ENCODE measurements at regions of chr10 and their contacts with region 1.

Region 1: DNA sequence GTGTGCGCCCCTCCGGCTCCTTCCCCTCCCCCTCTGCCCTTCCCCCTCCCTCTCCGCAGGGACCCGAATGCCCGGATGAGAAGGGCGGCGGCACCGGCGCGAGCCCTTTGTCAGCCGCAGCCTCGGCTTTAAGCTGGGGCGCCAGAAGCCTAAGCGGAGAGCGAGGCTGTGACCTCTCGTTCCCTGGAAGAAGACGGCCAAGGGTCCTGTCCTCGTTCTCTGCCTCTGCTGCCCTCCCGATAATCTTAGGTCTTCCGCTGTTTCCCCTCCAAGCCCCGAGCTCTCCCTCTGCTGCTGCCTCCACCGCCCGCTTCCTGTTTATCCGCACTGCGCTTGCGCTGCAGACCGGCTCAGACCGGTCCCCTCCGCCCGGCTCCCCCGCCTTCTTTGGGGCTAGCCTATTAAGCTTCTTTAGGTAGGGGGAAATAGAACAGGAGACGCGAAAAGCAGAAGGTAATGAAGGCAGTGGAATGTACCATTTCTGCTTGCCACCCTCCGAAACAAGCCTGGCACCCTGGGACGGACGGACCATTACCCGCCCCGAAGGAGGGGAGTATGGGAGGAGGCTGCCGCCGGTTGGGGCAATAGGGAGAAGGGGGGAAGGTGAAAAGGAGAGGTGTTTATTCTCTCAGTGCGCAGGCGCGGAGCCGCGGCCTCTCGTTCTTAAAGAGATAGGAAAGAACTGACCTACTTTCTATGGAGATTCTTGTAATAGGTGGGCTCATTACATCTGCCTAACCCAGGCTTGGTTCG is at the start of gene OGA:
- DNase-seq: peak; percentile 90 to 99 (median 98)
- ATAC-seq: peak; percentile 91 to 92 (median 91)
- H3K4me3 ChIP-seq: peak within 1 kb of the TSS; percentile 95 to 100
- H3K4me3 Mint-ChIP-seq: peak within 1 kb of the TSS; percentile 94 to 99 (median 98)
- H3K27ac ChIP-seq: peak within 1 kb of the TSS; percentile 74
- H3K27ac Mint-ChIP-seq: peak within 1 kb of the TSS; percentile 96 to 98
- H3K4me1 ChIP-seq: peaks cover 26 to 29% of the 10 kb centered on the region in 2 experiments
- H3K4me1 Mint-ChIP-seq: peaks cover 41 to 61% (median 46%) of the 10 kb centered on the region in 3 donors
- H3K27me3 ChIP-seq: no peaks in the 10 kb centered on the region
- H3K27me3 Mint-ChIP-seq: no peaks in the 10 kb centered on the region
- total RNA-seq, gene OGA: 232 to 364 (median 244) TPM

Region 2: GRCh38 chr10:101772895-101773761 is 45.2 kb before region 1 on chr10:
- CTCF ChIA-PET with region 1: no interaction called
- POLR2A ChIA-PET with region 1: no interaction called
- DNase-seq: no peak
- ATAC-seq: no peak
- H3K4me3 ChIP-seq: no peak overlapping the region
- H3K4me3 Mint-ChIP-seq: no peak overlapping the region
- H3K27ac ChIP-seq: no peak overlapping the region
- H3K27ac Mint-ChIP-seq: no peak overlapping the region
- H3K4me1 ChIP-seq: peaks cover 3 to 25% of the 10 kb centered on the region in 2 experiments
- H3K4me1 Mint-ChIP-seq: peaks cover 19 to 32% (median 20%) of the 10 kb centered on the region in 3 donors
- H3K27me3 ChIP-seq: peaks cover 23 to 85% of the 10 kb centered on the region in 2 experiments
- H3K27me3 Mint-ChIP-seq: peaks cover 51 to 72% of the 10 kb centered on the region in 2 donors

Region 3: GRCh38 chr10:101835064-101835761 is 16.9 kb after region 1 on chr10:
- CTCF ChIA-PET with region 1: interaction called, 6 to 28 read pairs
- POLR2A ChIA-PET with region 1: interaction called in 1 of 2 experiments, 5 read pairs
- DNase-seq: no peak
- ATAC-seq: no peak
- H3K4me3 ChIP-seq: no peak overlapping the region
- H3K4me3 Mint-ChIP-seq: peak overlapping the region in 1 of 3 donors; percentile 5
- H3K27ac ChIP-seq: no peak overlapping the region
- H3K27ac Mint-ChIP-seq: peak overlapping the region; percentile 53 to 63
- H3K4me1 ChIP-seq: peaks cover 53 to 72% of the 10 kb centered on the region in 2 experiments
- H3K4me1 Mint-ChIP-seq: peaks cover 60 to 68% (median 65%) of the 10 kb centered on the region in 3 donors
- H3K27me3 ChIP-seq: no peaks in the 10 kb centered on the region
- H3K27me3 Mint-ChIP-seq: no peaks in the 10 kb centered on the region

Region 4: DNA sequence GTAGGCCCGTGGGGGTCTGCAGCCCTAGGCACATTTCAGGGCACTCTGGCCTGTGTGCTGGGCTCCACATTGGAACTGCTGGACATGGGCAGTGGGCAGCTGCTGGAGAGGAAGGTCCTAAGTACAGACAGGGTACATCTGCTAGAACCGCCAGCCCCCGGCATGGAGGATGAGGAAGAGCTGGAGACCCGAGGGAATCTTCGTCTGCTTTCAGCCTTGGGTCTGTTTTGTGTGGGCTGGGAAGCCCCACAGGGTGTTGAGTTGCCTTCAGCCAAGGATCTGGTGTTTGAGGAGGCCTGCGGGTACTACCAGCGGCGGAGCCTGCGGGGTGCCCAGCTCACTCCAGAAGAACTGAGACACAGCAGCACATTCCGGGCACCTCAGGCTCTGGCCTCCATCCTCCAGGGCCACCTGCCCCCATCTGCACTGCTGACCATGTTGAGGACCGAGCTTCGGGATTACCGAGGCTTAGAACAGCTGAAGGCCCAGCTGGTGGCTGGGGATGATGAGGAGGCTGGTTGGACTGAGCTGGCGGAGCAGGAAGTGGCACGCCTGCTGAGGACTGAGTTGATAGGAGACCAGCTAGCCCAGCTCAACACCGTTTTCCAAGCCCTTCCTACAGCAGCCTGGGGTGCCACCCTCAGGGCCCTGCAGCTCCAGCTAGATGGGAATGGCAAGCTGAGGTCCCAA is 248.2 kb after region 1 on chr10:
- CTCF ChIA-PET with region 1: no interaction called
- POLR2A ChIA-PET with region 1: interaction called in 1 of 2 experiments, 10 read pairs
- DNase-seq: no peak
- ATAC-seq: no peak
- H3K4me3 ChIP-seq: peak overlapping the region; percentile 55 to 86
- H3K4me3 Mint-ChIP-seq: peak overlapping the region; percentile 80 to 88 (median 85)
- H3K27ac ChIP-seq: peak overlapping the region; percentile 61
- H3K27ac Mint-ChIP-seq: peak overlapping the region; percentile 84 to 89
- H3K4me1 ChIP-seq: peaks cover 4 to 34% of the 10 kb centered on the region in 2 experiments
- H3K4me1 Mint-ChIP-seq: peaks cover 32 to 40% (median 37%) of the 10 kb centered on the region in 3 donors
- H3K27me3 ChIP-seq: no peaks in the 10 kb centered on the region
- H3K27me3 Mint-ChIP-seq: no peaks in the 10 kb centered on the region

Measured in T-cell (primary cell).